PC-3 (cell line): ENCODE measurements at regions of chr3 and their contacts with region 1.

Region 1: GRCh38 chr3:161231861-161232260 is 10.8 kb downstream of the NMD3 start:
- DNase-seq: peak; percentile 26
- ATAC-seq: peak; percentile 78
- H3K4me3 ChIP-seq: no peak overlapping the region
- H3K27ac ChIP-seq: no peak overlapping the region
- H3K4me1 ChIP-seq: no peaks in the 10 kb centered on the region
- H3K27me3 ChIP-seq: no peaks in the 10 kb centered on the region
- CTCF ChIP-seq: no peak

Region 2: GRCh38 chr3:161247049-161247448 is 15.2 kb after region 1 on chr3:
- CTCF ChIA-PET with region 1: no interaction called
- POLR2A ChIA-PET with region 1: no interaction called
- intact Hi-C with region 1: loop called (anchors 2 kb)
- DNase-seq: no peak
- ATAC-seq: no peak
- H3K4me3 ChIP-seq: no peak overlapping the region
- H3K27ac ChIP-seq: no peak overlapping the region
- H3K4me1 ChIP-seq: no peaks in the 10 kb centered on the region
- H3K27me3 ChIP-seq: no peaks in the 10 kb centered on the region
- CTCF ChIP-seq: no peak